ENCODE measurements at regions of chr3 and their contacts with region 1.

Region 1: DNA sequence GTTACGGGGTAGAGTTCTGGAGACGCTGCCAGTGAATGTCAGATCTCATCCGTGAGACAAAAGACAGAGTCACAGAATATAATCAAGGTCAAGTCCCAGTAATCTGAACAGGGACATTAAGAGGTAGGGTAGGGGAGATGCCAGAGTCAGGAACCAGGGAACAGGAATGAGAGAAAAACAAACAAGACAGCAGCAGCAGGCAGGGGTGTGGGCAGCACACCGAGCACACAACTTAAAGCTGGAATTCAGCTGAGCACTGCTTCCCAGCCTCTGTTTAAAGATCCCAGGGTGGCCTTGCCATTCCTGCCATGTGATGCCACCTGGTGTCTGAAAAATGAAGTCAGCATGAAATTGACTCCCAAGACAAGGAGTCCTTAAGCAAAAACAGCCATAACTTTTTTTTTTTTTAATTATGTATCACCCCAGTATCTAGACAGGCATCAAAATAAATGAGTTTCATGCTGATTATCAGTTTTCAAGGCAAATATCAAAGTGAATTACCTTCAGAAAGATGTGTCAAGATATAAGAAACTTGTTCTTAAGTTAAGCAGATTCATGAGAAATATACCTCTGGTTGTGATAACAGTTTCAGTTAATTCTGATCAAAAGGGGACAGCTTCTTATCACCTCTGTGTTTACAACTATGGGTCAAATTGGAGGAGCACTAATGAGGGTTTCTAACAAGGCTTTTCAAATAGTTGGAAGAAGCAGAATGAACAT is 203.7 kb downstream of the SLC9A9 start:
- DNase-seq: peak; percentile 85
- H3K4me3 Mint-ChIP-seq: no peak overlapping the region
- H3K27ac Mint-ChIP-seq: peak overlapping the region; percentile 81
- H3K4me1 Mint-ChIP-seq: peaks cover 6% of the 10 kb centered on the region
- H3K27me3 Mint-ChIP-seq: no peaks in the 10 kb centered on the region
- CTCF ChIP-seq: peak; percentile 69

Region 2: DNA sequence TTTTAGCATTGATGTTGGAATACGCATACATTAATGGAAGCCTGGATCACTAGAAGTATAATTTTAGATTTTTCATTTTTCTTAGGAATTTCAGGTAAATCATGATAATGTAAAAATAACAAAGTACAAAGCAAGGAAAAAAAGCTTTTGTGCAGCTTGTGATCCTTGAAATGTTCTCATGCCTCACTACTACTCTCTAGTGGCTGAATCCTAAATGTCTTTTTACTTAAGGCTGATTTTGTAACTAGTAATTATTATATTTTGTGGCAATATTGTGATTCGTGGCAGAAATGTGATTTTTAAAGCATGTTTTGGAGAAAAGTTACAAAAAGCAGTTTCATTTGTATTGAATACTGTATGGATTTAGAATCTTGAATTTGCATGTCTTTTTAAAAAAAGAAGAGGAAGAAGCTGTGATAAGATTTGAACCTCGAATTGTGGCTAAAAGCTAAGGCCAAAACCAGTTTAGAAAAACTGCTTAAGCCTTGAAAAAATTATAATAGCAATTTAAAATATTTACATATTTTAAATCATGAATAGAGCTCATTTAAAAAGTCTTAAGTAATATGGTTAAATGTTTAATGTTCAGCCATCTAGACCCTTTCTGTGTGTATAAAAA is 604.2 kb before region 1 on chr3:
- CTCF ChIA-PET with region 1: interaction called, 6 read pairs
- POLR2A ChIA-PET with region 1: no interaction called
- intact Hi-C with region 1: loop called (anchors 10 kb)
- DNase-seq: peak; percentile 25
- H3K4me3 Mint-ChIP-seq: no peak overlapping the region
- H3K27ac Mint-ChIP-seq: no peak overlapping the region
- H3K4me1 Mint-ChIP-seq: no peaks in the 10 kb centered on the region
- H3K27me3 Mint-ChIP-seq: no peaks in the 10 kb centered on the region
- CTCF ChIP-seq: peak; percentile 38

Region 3: DNA sequence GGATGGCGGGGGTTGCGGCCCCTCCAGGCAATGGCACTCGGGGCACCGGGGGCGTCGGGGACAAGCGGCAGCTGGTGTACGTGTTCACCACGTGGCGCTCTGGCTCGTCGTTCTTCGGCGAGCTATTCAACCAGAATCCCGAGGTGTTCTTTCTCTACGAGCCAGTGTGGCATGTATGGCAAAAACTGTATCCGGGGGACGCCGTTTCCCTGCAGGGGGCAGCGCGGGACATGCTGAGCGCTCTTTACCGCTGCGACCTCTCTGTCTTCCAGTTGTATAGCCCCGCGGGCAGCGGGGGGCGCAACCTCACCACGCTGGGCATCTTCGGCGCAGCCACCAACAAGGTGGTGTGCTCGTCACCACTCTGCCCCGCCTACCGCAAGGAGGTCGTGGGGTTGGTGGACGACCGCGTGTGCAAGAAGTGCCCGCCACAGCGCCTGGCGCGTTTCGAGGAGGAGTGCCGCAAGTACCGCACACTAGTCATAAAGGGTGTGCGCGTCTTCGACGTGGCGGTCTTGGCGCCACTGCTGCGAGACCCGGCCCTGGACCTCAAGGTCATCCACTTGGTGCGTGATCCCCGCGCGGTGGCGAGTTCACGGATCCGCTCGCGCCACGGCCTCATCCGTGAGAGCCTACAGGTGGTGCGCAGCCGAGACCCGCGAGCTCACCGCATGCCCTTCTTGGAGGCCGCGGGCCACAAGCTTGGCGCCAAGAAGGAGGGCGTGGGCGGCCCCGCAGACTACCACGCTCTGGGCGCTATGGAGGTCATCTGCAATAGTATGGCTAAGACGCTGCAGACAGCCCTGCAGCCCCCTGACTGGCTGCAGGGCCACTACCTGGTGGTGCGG is 523.1 kb before region 1 on chr3:
- CTCF ChIA-PET with region 1: interaction called, 5 read pairs
- POLR2A ChIA-PET with region 1: no interaction called
- intact Hi-C with region 1: loop called (anchors 5 kb)
- DNase-seq: peak; percentile 3
- H3K4me3 Mint-ChIP-seq: no peak overlapping the region
- H3K27ac Mint-ChIP-seq: no peak overlapping the region
- H3K4me1 Mint-ChIP-seq: no peaks in the 10 kb centered on the region
- H3K27me3 Mint-ChIP-seq: no peaks in the 10 kb centered on the region
- CTCF ChIP-seq: no peak

Region 4: DNA sequence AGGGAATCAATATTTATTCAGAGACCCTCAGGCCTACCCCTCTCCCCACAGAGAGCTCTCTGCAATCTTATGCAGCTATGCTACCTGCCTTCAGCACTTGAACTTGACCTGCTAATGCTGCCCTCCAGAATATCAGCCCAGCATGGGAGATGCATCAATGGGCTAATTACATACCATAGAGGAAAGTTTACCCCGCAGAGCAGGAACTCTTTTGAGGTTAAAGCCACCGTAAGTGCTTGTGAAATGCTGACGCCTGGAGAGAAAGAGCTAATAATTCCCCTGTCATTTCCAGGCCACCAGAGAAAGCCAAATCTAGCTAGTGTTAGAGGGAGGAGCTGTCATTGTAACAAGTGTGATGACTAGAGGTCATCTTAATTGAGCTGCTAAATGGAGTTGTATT is 397.5 kb before region 1 on chr3:
- CTCF ChIA-PET with region 1: no interaction called
- POLR2A ChIA-PET with region 1: no interaction called
- intact Hi-C with region 1: no loop called
- DNase-seq: no peak
- H3K4me3 Mint-ChIP-seq: no peak overlapping the region
- H3K27ac Mint-ChIP-seq: no peak overlapping the region
- H3K4me1 Mint-ChIP-seq: peaks cover 6% of the 10 kb centered on the region
- H3K27me3 Mint-ChIP-seq: no peaks in the 10 kb centered on the region
- CTCF ChIP-seq: no peak

Region 5: DNA sequence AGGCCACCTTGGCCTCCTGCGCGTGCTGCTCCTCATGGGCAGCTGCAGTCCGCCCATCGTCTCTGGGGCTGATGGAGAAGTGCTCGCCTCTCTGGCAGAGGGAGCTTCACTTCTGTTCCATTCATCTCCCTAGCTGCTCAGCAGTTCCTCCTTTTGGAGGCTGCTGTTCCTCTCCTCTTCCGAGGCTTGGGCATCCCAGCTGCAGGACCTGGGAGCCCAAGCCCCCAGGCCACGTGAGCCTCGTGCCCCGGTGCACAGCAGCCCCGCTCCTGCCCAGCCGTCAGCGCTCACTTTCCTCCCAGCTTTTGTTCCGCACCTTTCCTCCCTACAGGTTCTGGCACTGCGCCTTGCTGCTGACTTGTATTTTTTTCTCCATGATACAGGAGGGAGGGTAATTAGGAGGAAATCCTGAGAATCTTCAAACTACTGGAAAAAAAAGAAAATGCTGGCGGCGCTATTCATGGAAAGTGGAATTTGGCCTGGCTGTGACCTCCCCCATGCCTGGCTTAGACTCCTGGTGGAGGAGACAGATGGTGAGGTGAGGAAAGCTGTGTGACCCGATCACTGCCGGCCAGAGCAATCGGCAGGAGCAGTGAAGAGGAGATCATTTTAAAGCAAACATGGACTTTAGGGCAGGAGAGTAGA is 314.8 kb before region 1 on chr3:
- CTCF ChIA-PET with region 1: no interaction called
- POLR2A ChIA-PET with region 1: no interaction called
- intact Hi-C with region 1: loop called (anchors 1 kb)
- DNase-seq: no peak
- H3K4me3 Mint-ChIP-seq: no peak overlapping the region
- H3K27ac Mint-ChIP-seq: no peak overlapping the region
- H3K4me1 Mint-ChIP-seq: peaks cover 6% of the 10 kb centered on the region
- H3K27me3 Mint-ChIP-seq: no peaks in the 10 kb centered on the region
- CTCF ChIP-seq: no peak

Region 6: GRCh38 chr3:143414571-143415253 is 229.8 kb before region 1 on chr3:
- CTCF ChIA-PET with region 1: no interaction called
- POLR2A ChIA-PET with region 1: no interaction called
- intact Hi-C with region 1: no loop called
- DNase-seq: no peak
- H3K4me3 Mint-ChIP-seq: no peak overlapping the region
- H3K27ac Mint-ChIP-seq: no peak overlapping the region
- H3K4me1 Mint-ChIP-seq: no peaks in the 10 kb centered on the region
- H3K27me3 Mint-ChIP-seq: no peaks in the 10 kb centered on the region
- CTCF ChIP-seq: no peak

Region 7: DNA sequence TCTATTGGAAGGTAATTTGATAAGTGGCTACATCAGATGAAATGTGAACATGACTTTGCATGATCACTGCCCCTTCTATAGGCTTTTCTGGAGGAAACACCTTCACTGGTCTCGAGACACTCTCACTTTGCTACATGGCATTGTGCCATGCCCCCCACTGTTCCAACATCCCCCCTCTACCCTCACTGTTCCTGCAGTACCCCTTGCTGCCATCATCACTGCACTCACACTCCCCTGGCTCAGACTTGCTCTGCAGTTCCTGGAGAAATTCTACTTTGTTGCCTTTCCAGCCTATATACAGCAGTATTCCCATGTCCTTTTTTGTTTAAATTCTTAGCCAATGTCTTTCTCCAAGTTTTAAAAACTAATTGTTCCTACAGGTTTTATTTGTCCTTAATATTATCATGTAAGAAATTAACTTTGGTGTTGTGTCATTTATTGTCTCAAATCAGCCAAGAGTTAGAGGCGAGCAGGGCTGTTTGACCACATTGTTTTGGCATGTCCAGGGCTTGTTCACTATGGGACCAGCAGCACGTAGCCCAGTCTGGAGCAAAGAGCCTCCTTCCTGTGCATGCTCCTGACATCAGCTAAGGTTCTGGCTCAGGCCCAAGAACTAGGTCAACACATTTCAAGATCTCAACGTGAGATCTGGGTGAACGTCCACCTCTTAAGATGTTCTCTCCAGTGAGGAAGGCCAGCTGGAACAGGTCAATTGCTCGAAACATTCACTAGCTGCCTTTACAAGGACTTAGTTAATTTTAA is 42.6 kb before region 1 on chr3:
- CTCF ChIA-PET with region 1: interaction called, 12 read pairs
- POLR2A ChIA-PET with region 1: interaction called, 4 read pairs
- intact Hi-C with region 1: no loop called
- DNase-seq: peak; percentile 78
- H3K4me3 Mint-ChIP-seq: no peak overlapping the region
- H3K27ac Mint-ChIP-seq: peak overlapping the region; percentile 93
- H3K4me1 Mint-ChIP-seq: peaks cover 25% of the 10 kb centered on the region
- H3K27me3 Mint-ChIP-seq: no peaks in the 10 kb centered on the region
- CTCF ChIP-seq: no peak

Region 8: DNA sequence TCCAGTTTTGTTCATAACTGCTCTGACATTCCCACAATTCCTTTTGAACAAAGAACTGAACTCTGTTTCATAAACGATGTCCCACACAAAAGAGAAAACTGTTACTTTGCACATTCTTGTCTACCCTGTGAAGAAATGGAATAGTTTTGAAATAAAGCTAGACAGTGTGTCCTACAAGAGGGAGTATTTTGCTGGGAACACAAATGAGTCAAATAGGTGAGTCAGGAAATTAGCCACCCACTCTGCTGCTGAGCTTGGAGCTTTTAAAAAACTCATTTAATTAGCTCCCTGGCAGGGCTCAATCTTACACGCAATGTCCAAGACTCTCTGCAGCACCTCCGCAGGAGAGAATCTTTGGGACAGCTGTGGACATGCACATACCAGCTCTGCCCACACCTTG is 10.4 kb after region 1 on chr3:
- CTCF ChIA-PET with region 1: interaction called, 15 read pairs
- POLR2A ChIA-PET with region 1: interaction called, 16 read pairs
- intact Hi-C with region 1: no loop called
- DNase-seq: peak; percentile 72
- H3K4me3 Mint-ChIP-seq: no peak overlapping the region
- H3K27ac Mint-ChIP-seq: peak overlapping the region; percentile 72
- H3K4me1 Mint-ChIP-seq: peaks cover 28% of the 10 kb centered on the region
- H3K27me3 Mint-ChIP-seq: no peaks in the 10 kb centered on the region
- CTCF ChIP-seq: no peak

Region 9: GRCh38 chr3:143763564-143764162 is 119.1 kb after region 1 on chr3:
- CTCF ChIA-PET with region 1: interaction called, 3 read pairs
- POLR2A ChIA-PET with region 1: interaction called, 3 read pairs
- intact Hi-C with region 1: loop called (anchors 1 kb)
- DNase-seq: peak; percentile 44
- H3K4me3 Mint-ChIP-seq: no peak overlapping the region
- H3K27ac Mint-ChIP-seq: no peak overlapping the region
- H3K4me1 Mint-ChIP-seq: no peaks in the 10 kb centered on the region
- H3K27me3 Mint-ChIP-seq: no peaks in the 10 kb centered on the region
- CTCF ChIP-seq: peak; percentile 54